Activated CD4-positive, alpha-beta memory T cell treated with anti-CD3 and anti-CD28 coated beads for 36 hours (primary cell): ENCODE measurements at regions of chr11 and their contacts with region 1.

Region 1: GRCh38 chr11:82867495-82868082 is 32.6 kb downstream of the PRCP start:
- DNase-seq: peak; percentile 68
- H3K4me3 Mint-ChIP-seq: no peak overlapping the region
- H3K27ac Mint-ChIP-seq: no peak overlapping the region
- H3K4me1 Mint-ChIP-seq: peaks cover 12% of the 10 kb centered on the region
- H3K27me3 Mint-ChIP-seq: no peaks in the 10 kb centered on the region

Region 2: DNA sequence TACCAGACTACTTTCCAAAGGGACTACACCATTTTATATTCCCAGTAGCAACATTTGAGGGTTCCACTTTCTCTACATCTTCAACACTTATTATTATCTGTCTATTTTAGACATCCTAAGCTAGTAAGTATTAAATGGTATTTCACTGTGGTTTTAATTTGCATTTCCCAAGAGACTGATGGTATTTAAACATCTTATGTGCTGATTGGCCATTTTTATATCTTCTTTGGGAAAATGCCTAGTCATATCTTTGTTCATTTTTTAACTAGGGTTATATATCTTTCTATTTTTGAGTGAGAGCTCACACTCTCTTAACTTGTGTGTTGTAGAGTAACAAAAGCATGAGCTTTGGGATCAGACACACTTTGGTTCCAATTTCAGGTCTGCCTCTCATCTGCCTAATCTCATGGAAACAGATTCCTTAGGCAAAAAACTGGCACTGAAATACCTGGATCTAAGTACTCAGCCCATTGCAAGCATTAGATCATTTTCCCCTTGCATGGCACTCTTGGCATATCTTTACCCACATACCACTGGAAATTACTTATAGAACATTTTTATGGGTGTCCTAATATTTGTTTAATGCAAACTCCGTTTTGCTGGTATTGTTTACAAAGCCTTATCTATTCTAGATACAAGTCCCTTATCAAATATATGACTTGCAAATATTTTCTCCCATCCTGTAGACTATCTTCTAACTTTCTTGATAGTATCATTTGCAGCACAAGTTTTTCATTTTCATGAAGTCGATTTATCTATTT is 40.9 kb before region 1 on chr11:
- CTCF ChIA-PET with region 1: no interaction called
- POLR2A ChIA-PET with region 1: no interaction called
- intact Hi-C with region 1: no loop called
- DNase-seq: no peak
- H3K4me3 Mint-ChIP-seq: no peak overlapping the region
- H3K27ac Mint-ChIP-seq: no peak overlapping the region
- H3K4me1 Mint-ChIP-seq: no peaks in the 10 kb centered on the region
- H3K27me3 Mint-ChIP-seq: no peaks in the 10 kb centered on the region

Region 3: GRCh38 chr11:82845356-82846353 is 21.9 kb before region 1 on chr11:
- CTCF ChIA-PET with region 1: interaction called, 20 read pairs
- POLR2A ChIA-PET with region 1: no interaction called
- intact Hi-C with region 1: no loop called
- DNase-seq: no peak
- H3K4me3 Mint-ChIP-seq: no peak overlapping the region
- H3K27ac Mint-ChIP-seq: no peak overlapping the region
- H3K4me1 Mint-ChIP-seq: no peaks in the 10 kb centered on the region
- H3K27me3 Mint-ChIP-seq: no peaks in the 10 kb centered on the region

Region 4: DNA sequence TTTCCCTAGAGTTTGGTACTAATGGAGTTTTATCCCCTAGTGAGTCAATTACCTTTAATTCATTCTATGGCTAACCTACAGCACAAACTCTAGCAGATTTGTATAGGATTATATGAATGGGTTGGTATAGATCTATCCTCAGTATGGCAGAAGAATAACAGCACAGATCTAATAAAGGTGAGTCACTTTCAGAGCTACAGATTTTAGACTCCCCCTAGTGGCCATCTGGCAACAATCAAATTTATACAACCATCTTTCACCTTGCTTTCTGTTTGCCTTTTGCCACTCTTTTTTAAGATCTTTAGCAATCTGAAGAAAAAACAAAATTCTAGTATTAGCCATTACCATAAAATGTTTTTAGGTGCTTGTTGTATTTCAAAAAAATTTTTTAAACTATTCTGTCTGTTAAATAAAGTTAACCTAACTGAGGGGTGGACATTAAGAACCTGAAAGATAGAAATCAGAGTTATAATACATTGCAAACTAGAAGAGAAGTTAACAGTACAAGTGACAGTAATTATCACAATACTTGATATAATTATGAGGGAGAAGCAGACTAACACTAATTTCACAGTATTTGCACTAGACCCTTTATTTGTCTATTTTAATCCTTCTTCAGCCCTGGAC is 59.8 kb after region 1 on chr11:
- CTCF ChIA-PET with region 1: interaction called, 11 read pairs
- POLR2A ChIA-PET with region 1: no interaction called
- intact Hi-C with region 1: loop called (anchors 1 kb)
- DNase-seq: no peak
- H3K4me3 Mint-ChIP-seq: no peak overlapping the region
- H3K27ac Mint-ChIP-seq: no peak overlapping the region
- H3K4me1 Mint-ChIP-seq: peaks cover 14% of the 10 kb centered on the region
- H3K27me3 Mint-ChIP-seq: no peaks in the 10 kb centered on the region

Region 5: DNA sequence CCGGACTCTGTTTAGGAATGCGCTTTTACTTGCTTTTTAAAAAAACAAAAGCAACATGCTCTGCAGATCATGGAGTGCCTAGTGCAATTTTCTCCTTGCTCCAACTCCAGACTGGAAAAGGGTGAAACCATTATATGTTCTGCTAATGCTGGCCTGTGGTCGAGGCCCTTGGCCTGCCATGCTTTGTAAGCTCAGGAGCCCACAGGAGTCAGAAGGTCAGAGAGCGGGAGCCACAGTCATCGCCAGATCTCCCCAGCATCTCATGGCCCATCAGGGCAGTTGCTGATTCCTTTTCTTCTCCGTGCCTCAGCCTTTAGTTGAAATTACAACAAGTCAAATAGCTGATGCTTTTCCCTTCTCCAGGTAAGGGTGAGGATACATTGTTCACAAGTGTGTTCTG is 114.3 kb after region 1 on chr11:
- CTCF ChIA-PET with region 1: no interaction called
- POLR2A ChIA-PET with region 1: no interaction called
- intact Hi-C with region 1: no loop called
- DNase-seq: no peak
- H3K4me3 Mint-ChIP-seq: no peak overlapping the region
- H3K27ac Mint-ChIP-seq: no peak overlapping the region
- H3K4me1 Mint-ChIP-seq: peaks cover 41% of the 10 kb centered on the region
- H3K27me3 Mint-ChIP-seq: no peaks in the 10 kb centered on the region

Region 6: GRCh38 chr11:83044958-83045712 is 177.5 kb after region 1 on chr11:
- CTCF ChIA-PET with region 1: no interaction called
- POLR2A ChIA-PET with region 1: no interaction called
- intact Hi-C with region 1: no loop called
- DNase-seq: no peak
- H3K4me3 Mint-ChIP-seq: no peak overlapping the region
- H3K27ac Mint-ChIP-seq: no peak overlapping the region
- H3K4me1 Mint-ChIP-seq: peaks cover 15% of the 10 kb centered on the region
- H3K27me3 Mint-ChIP-seq: no peaks in the 10 kb centered on the region

Region 7: DNA sequence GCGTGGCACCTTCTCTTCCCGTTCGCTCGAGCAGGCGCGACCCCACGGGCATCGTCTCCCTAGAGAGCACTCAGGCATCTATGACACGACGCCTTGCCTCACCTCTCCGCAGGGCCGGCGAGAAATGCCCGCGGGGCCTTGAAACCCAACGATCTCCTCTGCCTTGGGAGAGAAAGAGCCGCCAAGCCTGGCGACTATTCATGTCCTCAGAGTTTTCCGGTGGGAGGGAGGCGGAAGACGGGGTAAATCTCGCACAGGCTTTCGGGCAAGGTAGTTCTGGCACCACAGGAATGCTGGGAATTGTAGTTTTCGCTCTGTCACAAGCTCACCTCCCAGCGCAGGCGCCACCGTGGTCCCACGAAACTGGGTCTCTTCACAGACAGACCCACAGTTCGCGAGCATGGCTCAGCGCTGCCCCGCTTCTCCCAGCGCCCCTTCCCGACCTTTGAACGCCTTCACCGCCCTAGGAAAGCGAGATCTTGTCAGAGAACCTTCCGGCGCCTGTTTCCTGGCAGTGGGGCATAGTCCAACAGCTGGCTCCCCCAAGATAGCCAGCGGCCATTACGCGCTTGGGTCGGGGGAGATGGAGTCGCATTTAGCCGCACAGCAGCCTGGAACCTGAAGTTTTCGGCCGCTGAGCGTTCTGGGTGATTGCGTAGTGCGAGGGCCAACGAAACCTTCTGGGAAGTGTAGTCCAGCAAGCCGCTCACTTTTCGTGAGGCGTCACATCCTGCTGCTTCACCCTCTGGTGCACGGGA is 418.4 kb after region 1 on chr11 and contains the start of gene CCDC90B:
- CTCF ChIA-PET with region 1: interaction called, 12 read pairs
- POLR2A ChIA-PET with region 1: no interaction called
- intact Hi-C with region 1: no loop called
- DNase-seq: peak; percentile 96
- H3K4me3 Mint-ChIP-seq: peak within 1 kb of the TSS; percentile 92
- H3K27ac Mint-ChIP-seq: peak within 1 kb of the TSS; percentile 99
- H3K4me1 Mint-ChIP-seq: peaks cover 35% of the 10 kb centered on the region
- H3K27me3 Mint-ChIP-seq: no peaks in the 10 kb centered on the region
- total RNA-seq, gene CCDC90B: 29.2 to 32.3 TPM

Region 8: DNA sequence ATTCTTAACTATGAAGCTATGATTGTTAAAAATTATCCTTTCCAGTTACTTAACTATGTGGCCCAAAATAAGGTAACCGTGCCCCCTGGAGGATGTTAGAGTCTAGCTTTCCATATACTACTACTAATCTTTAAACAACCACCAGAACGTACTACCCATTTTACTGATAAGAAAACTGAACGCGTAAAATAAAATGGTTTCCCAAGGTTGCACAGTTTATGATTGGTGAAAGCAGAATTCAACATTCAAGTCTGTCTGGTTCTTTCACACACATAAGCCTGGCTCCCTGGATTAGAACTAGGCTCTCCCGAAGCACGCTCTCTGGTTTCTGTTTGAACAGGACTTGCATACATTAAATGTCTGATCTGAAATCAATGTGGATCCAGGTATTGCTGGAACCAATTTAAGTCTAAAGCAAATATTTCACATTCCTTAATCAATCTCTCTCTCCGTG is 856.4 kb after region 1 on chr11:
- CTCF ChIA-PET with region 1: no interaction called
- POLR2A ChIA-PET with region 1: no interaction called
- intact Hi-C with region 1: loop called (anchors 10 kb)
- DNase-seq: peak; percentile 13
- H3K4me3 Mint-ChIP-seq: peak overlapping the region; percentile 43
- H3K27ac Mint-ChIP-seq: no peak overlapping the region
- H3K4me1 Mint-ChIP-seq: peaks cover 7% of the 10 kb centered on the region
- H3K27me3 Mint-ChIP-seq: peaks cover 12% of the 10 kb centered on the region